ENCODE measurements at regions of chr5 and their contacts with region 1.

Region 1: GRCh38 chr5:179914032-179914755 is 6.5 kb upstream of the TBC1D9B start:
- DNase-seq: peak; percentile 81
- H3K4me3 Mint-ChIP-seq: peak overlapping the region; percentile 12
- H3K27ac Mint-ChIP-seq: peak overlapping the region; percentile 85
- H3K4me1 Mint-ChIP-seq: peaks cover 14% of the 10 kb centered on the region
- H3K27me3 Mint-ChIP-seq: no peaks in the 10 kb centered on the region
- CTCF ChIP-seq: no peak

Region 2: DNA sequence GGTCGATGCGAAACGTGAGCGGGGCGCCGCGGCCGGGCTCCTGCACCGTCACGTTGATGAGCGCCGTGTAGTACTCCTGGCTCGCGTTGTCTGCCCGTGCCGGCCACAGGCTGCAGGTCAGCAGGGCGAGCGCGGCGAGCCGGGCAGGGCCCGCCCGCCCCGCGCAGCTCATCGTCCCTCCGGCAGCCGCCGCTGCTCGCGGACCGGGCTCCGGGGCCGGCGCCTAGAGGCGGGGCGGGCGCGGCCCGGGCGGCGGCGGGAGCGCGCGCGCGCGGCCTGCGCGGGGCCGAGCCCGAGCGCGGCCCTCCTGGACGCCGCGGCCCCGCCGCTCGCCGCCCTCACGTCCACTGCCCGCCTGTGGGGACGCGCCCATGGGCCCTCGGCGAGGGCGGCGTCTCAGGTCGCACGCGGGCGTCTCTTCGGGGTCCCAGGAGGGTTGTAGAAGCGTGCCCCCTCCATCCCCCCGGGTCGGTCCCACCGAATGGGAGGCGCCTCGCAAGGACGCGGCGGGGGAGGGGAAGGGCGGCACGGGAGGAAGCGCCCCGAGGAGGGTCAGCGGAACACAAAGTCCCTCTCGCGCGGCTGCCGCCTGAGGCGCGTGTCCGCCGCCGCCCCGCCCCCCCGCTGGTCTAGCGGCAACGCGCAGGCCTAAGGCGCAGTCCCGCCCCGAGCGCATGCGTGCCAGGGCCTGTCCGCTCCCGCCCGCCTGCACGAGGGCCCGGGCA is 157.5 kb after region 1 on chr5 and contains the start of gene RNF130:
- CTCF ChIA-PET with region 1: no interaction called
- POLR2A ChIA-PET with region 1: interaction called, 15 read pairs
- intact Hi-C with region 1: loop called (anchors 5 kb)
- DNase-seq: peak; percentile 94
- H3K4me3 Mint-ChIP-seq: peak within 1 kb of the TSS; percentile 95
- H3K27ac Mint-ChIP-seq: peak within 1 kb of the TSS; percentile 87
- H3K4me1 Mint-ChIP-seq: peaks cover 23% of the 10 kb centered on the region
- H3K27me3 Mint-ChIP-seq: no peaks in the 10 kb centered on the region
- CTCF ChIP-seq: no peak
- total RNA-seq, gene RNF130: 31.8 and 34.0 TPM in 2 replicates

Measured in MCF 10A (cell line).